Colonic mucosa (tissue), 4 donors: ENCODE measurements at regions of chr3 and their contacts with region 1.

Region 1: GRCh38 chr3:197256836-197257444 is 41.5 kb downstream of the DLG1 start:
- DNase-seq: peak; percentile 49
- H3K4me3 ChIP-seq: no peak overlapping the region
- H3K27ac ChIP-seq: no peak overlapping the region
- H3K4me1 ChIP-seq: peaks cover 6% of the 10 kb centered on the region
- H3K27me3 ChIP-seq: no peaks in the 10 kb centered on the region
- CTCF ChIP-seq: peak; percentile 63

Region 2: GRCh38 chr3:196988241-196989029 is 268.5 kb before region 1 on chr3:
- intact Hi-C with region 1: no loop called
- DNase-seq: peak; percentile 58
- H3K4me3 ChIP-seq: no peak overlapping the region
- H3K27ac ChIP-seq: no peak overlapping the region
- H3K4me1 ChIP-seq: no peaks in the 10 kb centered on the region
- H3K27me3 ChIP-seq: no peaks in the 10 kb centered on the region
- CTCF ChIP-seq: no peak

Region 3: GRCh38 chr3:197309528-197310361 is 52.8 kb after region 1 on chr3:
- intact Hi-C with region 1: no loop called
- DNase-seq: no peak
- H3K4me3 ChIP-seq: no peak overlapping the region
- H3K27ac ChIP-seq: no peak overlapping the region
- H3K4me1 ChIP-seq: no peaks in the 10 kb centered on the region
- H3K27me3 ChIP-seq: no peaks in the 10 kb centered on the region
- CTCF ChIP-seq: no peak

Region 4: DNA sequence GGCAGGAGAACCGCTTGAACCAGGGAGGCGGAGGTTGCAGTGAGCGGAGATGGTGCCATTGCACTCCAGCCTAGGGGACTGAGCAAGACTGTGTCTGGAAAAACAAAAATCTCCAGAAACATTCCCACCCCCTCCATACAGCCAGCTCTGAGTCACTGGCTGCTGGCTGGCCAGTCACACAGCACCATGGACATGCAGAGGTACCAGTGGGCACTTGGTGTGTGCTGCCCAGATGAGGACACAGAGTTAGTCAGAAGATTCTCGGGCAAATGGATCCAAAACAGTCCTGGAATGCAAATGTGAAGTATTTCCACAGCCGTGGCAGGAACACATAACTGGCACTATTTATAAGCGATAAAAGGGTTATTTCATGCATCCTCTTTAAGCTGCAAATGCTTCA is 254.2 kb after region 1 on chr3:
- intact Hi-C with region 1: loop called (anchors 5 kb)
- DNase-seq: no peak
- H3K4me3 ChIP-seq: no peak overlapping the region
- H3K27ac ChIP-seq: no peak overlapping the region
- H3K4me1 ChIP-seq: no peaks in the 10 kb centered on the region
- H3K27me3 ChIP-seq: no peaks in the 10 kb centered on the region
- CTCF ChIP-seq: no peak